ENCODE measurements at regions of chr16 and their contacts with region 1.

Region 1: GRCh38 chr16:4358831-4359561 is 7.9 kb upstream of the PAM16 start:
- DNase-seq: no peak
- H3K4me3 ChIP-seq: no peak overlapping the region
- H3K27ac ChIP-seq: no peak overlapping the region
- H3K4me1 ChIP-seq: no peaks in the 10 kb centered on the region
- H3K27me3 ChIP-seq: no peaks in the 10 kb centered on the region
- CTCF ChIP-seq: peak; percentile 95 to 97 (median 96)
- POLR2A ChIP-seq: no peak

Region 2: DNA sequence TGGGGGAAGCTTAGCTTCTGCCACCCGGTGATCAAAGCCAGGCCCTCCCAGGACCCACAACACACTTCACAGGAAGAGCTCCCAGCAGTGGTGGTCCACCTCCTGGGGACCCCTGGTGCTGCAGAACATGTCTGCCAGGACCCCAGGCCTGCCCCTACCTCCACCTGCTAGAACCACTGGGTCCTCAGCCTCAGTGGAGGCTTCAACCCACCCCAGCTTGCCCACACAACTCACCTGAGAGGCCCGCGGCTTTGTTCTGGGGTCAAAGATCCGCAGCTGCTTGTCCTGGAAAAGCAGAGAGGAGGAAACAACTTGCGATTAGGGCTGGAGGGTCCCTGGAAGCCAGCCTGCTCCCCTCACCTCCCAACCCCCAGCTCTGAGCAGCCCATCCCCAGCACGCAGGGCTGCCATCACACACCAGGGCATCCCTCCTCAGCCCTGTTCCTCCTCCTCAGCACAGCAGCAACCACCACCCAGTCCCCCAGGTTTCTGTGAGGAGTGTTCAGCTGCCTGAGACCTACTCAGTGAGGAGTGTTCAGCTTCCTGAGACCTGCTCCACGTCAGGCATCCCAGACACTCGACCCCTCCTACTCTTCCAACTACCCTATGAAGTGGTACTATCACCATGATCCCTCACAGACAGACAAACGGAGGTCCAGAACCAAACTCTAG is 36.2 kb after region 1 on chr16:
- intact Hi-C with region 1: loop called (anchors 2 kb)
- DNase-seq: no peak
- H3K4me3 ChIP-seq: no peak overlapping the region
- H3K27ac ChIP-seq: no peak overlapping the region
- H3K4me1 ChIP-seq: no peaks in the 10 kb centered on the region
- H3K27me3 ChIP-seq: no peaks in the 10 kb centered on the region
- CTCF ChIP-seq: no peak
- POLR2A ChIP-seq: no peak